ENCODE measurements at regions of chr9 and their contacts with region 1.

Region 1: GRCh38 chr9:137176302-137177182 is 4.7 kb upstream of the TMEM210 start:
- DNase-seq: peak; percentile 73 to 91
- ATAC-seq: peak; percentile 78 to 85
- H3K4me3 ChIP-seq: no peak overlapping the region
- H3K27ac ChIP-seq: no peak overlapping the region
- H3K4me1 ChIP-seq: no peaks in the 10 kb centered on the region
- CTCF ChIP-seq: peak; percentile 54
- EP300 ChIP-seq: no peak
- POLR2A ChIP-seq: no peak
- RAD21 ChIP-seq: peak; percentile 24 to 48; a peak in 2 of 5 replicates

Region 2: DNA sequence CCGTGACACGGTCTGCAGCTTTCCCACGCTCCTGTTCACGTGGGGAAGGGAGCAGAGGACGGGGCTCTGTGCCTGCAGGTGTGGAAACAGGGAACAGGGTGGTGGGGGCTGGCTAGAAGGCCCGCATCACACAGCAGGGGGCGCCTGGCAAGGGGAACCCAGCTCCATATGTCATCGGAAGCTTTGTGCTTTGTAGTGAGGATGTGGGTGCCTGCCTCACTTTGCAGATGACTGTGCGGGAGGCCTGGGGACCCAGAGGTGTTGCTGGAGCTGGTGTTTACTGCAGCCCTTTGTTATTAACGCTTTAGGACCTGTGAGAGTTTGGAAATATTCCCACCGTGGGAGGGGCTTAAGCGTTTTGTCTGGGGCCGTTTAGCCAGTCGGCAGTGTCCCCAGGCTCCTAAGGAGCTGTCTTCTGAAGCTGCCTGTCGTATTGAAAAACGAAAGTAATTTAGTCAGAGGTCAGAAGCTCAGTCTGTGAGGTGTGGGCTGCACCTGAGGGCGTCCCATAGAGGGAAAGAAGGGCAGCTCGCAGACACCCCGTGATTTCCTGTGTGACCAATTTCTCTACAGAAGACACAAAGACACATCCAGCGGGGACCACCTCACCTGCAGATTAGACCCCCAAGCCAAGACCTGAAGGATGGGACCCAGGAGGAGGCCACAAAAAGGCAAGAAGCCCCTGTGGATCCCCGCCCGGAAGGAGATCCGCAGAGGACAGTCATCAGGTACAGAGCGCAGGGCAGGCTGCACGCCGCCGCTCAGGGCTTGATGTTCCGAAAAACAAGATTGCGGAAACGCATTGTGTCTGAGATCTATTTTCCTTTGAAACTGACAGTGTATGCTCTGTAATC is 80.7 kb before region 1 on chr9:
- CTCF ChIA-PET with region 1: no interaction called
- POLR2A ChIA-PET with region 1: no interaction called
- DNase-seq: no peak
- ATAC-seq: peak; percentile 40 to 63; a peak in 3 of 6 replicates
- H3K4me3 ChIP-seq: no peak overlapping the region
- H3K27ac ChIP-seq: no peak overlapping the region
- H3K4me1 ChIP-seq: no peaks in the 10 kb centered on the region
- CTCF ChIP-seq: no peak
- EP300 ChIP-seq: no peak
- POLR2A ChIP-seq: no peak
- RAD21 ChIP-seq: no peak

Region 3: GRCh38 chr9:137200311-137201204 is 24.0 kb after region 1 on chr9 and contains the start of gene TPRN:
- CTCF ChIA-PET with region 1: interaction called, 156 read pairs
- POLR2A ChIA-PET with region 1: interaction called, 8 read pairs
- DNase-seq: peak; percentile 98 to 100
- ATAC-seq: peak; percentile 87 to 96
- H3K4me3 ChIP-seq: peak within 1 kb of the TSS; percentile 60
- H3K27ac ChIP-seq: peak within 1 kb of the TSS; percentile 80 to 87
- H3K4me1 ChIP-seq: peaks cover 38% of the 10 kb centered on the region
- CTCF ChIP-seq: no peak
- EP300 ChIP-seq: no peak
- POLR2A ChIP-seq: peak; percentile 82
- RAD21 ChIP-seq: no peak
- polyA plus RNA-seq, gene TPRN: 2.1 and 2.4 TPM in 2 replicates

Region 4: GRCh38 chr9:137217276-137218211 is 41.0 kb after region 1 on chr9:
- CTCF ChIA-PET with region 1: interaction called, 13 read pairs
- POLR2A ChIA-PET with region 1: interaction called, 5 read pairs
- DNase-seq: no peak
- ATAC-seq: peak in 1 of 2 experiments; percentile 14; a peak in 3 of 6 replicates
- H3K4me3 ChIP-seq: no peak overlapping the region
- H3K27ac ChIP-seq: peak overlapping the region in 1 of 2 experiments; percentile 76; a peak in 3 of 6 replicates
- H3K4me1 ChIP-seq: peaks cover 33% of the 10 kb centered on the region
- CTCF ChIP-seq: no peak
- EP300 ChIP-seq: no peak
- POLR2A ChIP-seq: no peak
- RAD21 ChIP-seq: no peak